ENCODE measurements at regions of chr1 and their contacts with region 1.

Region 1: DNA sequence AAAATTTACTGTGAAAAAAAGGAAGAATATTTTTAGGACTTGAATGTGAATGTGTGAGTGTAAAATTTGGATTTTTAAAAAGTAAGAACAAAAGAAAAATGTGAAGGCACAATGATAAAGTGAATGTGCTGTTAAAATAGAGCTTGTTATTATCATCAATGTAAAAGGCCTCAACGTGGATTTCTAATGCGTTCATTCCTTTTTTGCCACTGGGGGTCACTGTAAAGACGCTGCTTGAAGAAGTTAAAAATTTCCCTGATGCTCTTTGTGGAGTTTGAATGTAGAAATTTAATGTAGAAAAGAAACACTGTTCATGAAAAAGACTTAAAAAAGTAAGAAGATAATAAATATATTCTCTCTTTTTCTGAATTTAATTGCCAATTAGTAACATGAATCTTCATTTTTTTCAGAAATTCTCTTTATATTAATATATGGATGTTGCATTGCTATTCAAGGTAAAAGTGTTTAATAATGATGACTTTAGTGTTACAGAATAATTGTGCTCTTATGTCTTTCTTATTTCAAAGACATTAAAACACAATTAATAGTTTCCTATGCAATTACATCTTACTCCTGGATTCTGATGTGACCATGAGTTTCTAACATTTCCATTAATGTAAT is 161.5 kb downstream of the DNM3 start:
- DNase-seq: peak; percentile 73
- ATAC-seq: peak; percentile 69
- H3K4me3 ChIP-seq: no peak overlapping the region
- H3K27ac ChIP-seq: no peak overlapping the region
- H3K4me1 ChIP-seq: peaks cover 3% of the 10 kb centered on the region; the same call in 1 of the 2 replicates
- H3K27me3 ChIP-seq: no peaks in the 10 kb centered on the region
- CTCF ChIP-seq: peak; percentile 92
- POLR2A ChIP-seq: no peak
- RAD21 ChIP-seq: peak; percentile 94

Region 2: DNA sequence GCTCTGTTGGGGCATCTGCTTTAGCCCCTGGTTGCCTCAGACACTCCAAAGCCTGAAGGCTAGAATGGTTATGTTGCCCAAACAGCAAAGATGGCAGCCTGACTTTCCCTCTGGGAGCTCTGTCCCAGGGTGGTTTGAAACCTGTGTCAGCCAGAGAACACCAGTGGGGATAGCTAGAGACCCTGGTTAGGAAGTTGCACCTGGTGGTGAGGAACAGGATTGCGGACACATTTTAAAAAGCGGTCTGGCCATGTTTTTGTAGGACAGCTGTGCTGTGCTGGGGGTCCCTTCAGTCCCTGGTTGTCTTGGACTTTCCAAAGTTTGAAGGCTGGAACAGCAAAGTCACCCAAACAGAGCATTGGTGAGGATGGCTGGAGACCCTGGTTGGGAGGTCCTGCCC is 73.7 kb before region 1 on chr1:
- CTCF ChIA-PET with region 1: no interaction called
- POLR2A ChIA-PET with region 1: no interaction called
- dilution Hi-C with region 1: no loop called
- in situ Hi-C with region 1: no loop called
- intact Hi-C with region 1: no loop called
- DNase-seq: no peak
- ATAC-seq: no peak
- H3K4me3 ChIP-seq: no peak overlapping the region
- H3K27ac ChIP-seq: no peak overlapping the region
- H3K4me1 ChIP-seq: no peaks in the 10 kb centered on the region
- H3K27me3 ChIP-seq: peaks cover 4% of the 10 kb centered on the region; the same call in 1 of the 2 replicates
- CTCF ChIP-seq: no peak
- POLR2A ChIP-seq: no peak
- RAD21 ChIP-seq: no peak

Region 3: GRCh38 chr1:172041742-172042141 is 38.9 kb after region 1 on chr1:
- CTCF ChIA-PET with region 1: no interaction called
- POLR2A ChIA-PET with region 1: no interaction called
- dilution Hi-C with region 1: no loop called
- in situ Hi-C with region 1: no loop called
- intact Hi-C with region 1: no loop called
- DNase-seq: peak; percentile 30
- ATAC-seq: peak; percentile 51; the same call in 1 of the 2 replicates
- H3K4me3 ChIP-seq: no peak overlapping the region
- H3K27ac ChIP-seq: no peak overlapping the region
- H3K4me1 ChIP-seq: peaks cover 2% of the 10 kb centered on the region
- H3K27me3 ChIP-seq: no peaks in the 10 kb centered on the region
- CTCF ChIP-seq: peak; percentile 61
- POLR2A ChIP-seq: no peak
- RAD21 ChIP-seq: peak; percentile 67

Region 4: DNA sequence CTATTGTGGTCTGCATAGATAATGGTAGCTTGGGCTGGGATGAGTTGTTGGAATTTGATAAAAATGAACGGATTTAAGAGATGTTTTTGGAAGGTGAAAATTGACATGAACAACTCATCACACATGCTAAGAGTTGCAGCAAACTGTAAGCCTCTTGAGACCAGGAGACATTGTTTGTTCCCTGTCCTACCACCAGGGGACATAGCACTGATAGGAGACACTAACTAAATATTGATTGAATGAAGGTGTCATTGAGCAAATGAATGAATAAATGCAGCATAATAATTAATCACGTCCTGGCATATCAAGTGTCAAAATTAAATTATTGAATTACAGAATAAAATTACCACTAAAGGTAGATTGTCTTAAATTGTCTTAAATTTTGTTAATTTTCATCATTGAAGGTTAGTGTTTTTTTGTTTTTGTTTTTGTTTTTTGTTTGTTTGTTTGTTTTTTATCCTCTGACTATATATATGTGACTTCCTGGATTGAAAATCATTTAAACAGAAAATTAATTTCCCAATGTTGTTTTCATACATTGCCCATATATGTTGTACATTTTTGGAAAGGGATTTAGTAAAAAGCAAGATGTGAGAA is 132.3 kb after region 1 on chr1:
- CTCF ChIA-PET with region 1: no interaction called
- POLR2A ChIA-PET with region 1: no interaction called
- dilution Hi-C with region 1: no loop called
- in situ Hi-C with region 1: no loop called
- intact Hi-C with region 1: loop called (anchors 2 kb)
- DNase-seq: no peak
- ATAC-seq: no peak
- H3K4me3 ChIP-seq: no peak overlapping the region
- H3K27ac ChIP-seq: no peak overlapping the region
- H3K4me1 ChIP-seq: peaks cover 7% of the 10 kb centered on the region
- H3K27me3 ChIP-seq: no peaks in the 10 kb centered on the region
- CTCF ChIP-seq: peak; percentile 36
- POLR2A ChIP-seq: no peak
- RAD21 ChIP-seq: no peak; the same call in 1 of the 2 replicates

Region 5: GRCh38 chr1:172278478-172278877 is 275.6 kb after region 1 on chr1:
- CTCF ChIA-PET with region 1: no interaction called
- POLR2A ChIA-PET with region 1: no interaction called
- dilution Hi-C with region 1: no loop called
- in situ Hi-C with region 1: no loop called
- intact Hi-C with region 1: loop called (anchors 10 kb)
- DNase-seq: peak; percentile 82
- ATAC-seq: peak; percentile 92
- H3K4me3 ChIP-seq: no peak overlapping the region
- H3K27ac ChIP-seq: peak overlapping the region; percentile 36; the same call in 1 of the 2 replicates
- H3K4me1 ChIP-seq: peaks cover 7% of the 10 kb centered on the region
- H3K27me3 ChIP-seq: no peaks in the 10 kb centered on the region
- CTCF ChIP-seq: no peak
- POLR2A ChIP-seq: no peak
- RAD21 ChIP-seq: no peak

Region 6: GRCh38 chr1:172443626-172444453 is 441.0 kb after region 1 on chr1 and contains the start of gene PIGC:
- CTCF ChIA-PET with region 1: interaction called, 5 read pairs
- POLR2A ChIA-PET with region 1: no interaction called
- dilution Hi-C with region 1: no loop called
- in situ Hi-C with region 1: no loop called
- intact Hi-C with region 1: loop called (anchors 1 kb)
- DNase-seq: peak; percentile 79
- ATAC-seq: peak; percentile 99
- H3K4me3 ChIP-seq: peak within 1 kb of the TSS; percentile 90
- H3K27ac ChIP-seq: peak within 1 kb of the TSS; percentile 84
- H3K4me1 ChIP-seq: peaks cover 4% of the 10 kb centered on the region
- H3K27me3 ChIP-seq: no peaks in the 10 kb centered on the region
- CTCF ChIP-seq: peak; percentile 87
- POLR2A ChIP-seq: no peak
- RAD21 ChIP-seq: peak; percentile 75
- total RNA-seq, gene PIGC: 14.9 and 19.4 TPM in 2 replicates

Region 7: GRCh38 chr1:172719694-172720138 is 716.9 kb after region 1 on chr1:
- CTCF ChIA-PET with region 1: no interaction called
- POLR2A ChIA-PET with region 1: no interaction called
- dilution Hi-C with region 1: no loop called
- in situ Hi-C with region 1: loop called (anchors 25 kb)
- intact Hi-C with region 1: loop called (anchors 5 kb)
- DNase-seq: peak; percentile 57
- ATAC-seq: peak; percentile 83
- H3K4me3 ChIP-seq: no peak overlapping the region
- H3K27ac ChIP-seq: no peak overlapping the region
- H3K4me1 ChIP-seq: peaks cover 4% of the 10 kb centered on the region; the same call in 1 of the 2 replicates
- H3K27me3 ChIP-seq: no peaks in the 10 kb centered on the region
- CTCF ChIP-seq: peak; percentile 75
- POLR2A ChIP-seq: no peak
- RAD21 ChIP-seq: peak; percentile 82

Measured in IMR-90 (cell line).